ENCODE measurements at regions of chr10 and their contacts with region 1.

Region 1: DNA sequence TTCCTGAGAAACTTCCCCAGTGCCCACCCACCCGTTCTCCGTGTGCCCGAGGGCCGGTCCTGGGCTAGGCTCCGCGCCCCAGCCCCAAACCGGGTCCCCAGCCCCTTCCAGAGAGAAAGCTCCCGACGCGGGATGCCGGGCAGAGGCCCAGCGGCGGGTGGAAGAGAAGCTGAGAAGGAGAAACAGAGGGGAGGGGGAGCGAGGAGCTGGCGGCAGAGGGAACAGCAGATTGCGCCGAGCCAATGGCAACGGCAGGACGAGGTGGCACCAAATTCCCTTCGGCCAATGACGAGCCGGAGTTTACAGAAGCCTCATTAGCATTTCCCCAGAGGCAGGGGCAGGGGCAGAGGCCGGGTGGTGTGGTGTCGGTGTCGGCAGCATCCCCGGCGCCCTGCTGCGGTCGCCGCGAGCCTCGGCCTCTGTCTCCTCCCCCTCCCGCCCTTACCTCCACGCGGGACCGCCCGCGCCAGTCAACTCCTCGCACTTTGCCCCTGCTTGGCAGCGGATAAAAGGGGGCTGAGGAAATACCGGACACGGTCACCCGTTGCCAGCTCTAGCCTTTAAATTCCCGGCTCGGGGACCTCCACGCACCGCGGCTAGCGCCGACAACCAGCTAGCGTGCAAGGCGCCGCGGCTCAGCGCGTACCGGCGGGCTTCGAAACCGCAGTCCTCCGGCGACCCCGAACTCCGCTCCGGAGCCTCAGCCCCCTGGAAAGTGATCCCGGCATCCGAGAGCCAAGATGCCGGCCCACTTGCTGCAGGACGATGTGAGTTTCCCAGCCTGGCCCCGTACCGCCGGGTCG is at the start of gene SCD:
- DNase-seq: peak; percentile 81
- ATAC-seq: peak; percentile 94
- H3K4me3 ChIP-seq: peak within 1 kb of the TSS; percentile 89 to 94
- H3K27ac ChIP-seq: peak within 1 kb of the TSS; percentile 95
- H3K4me1 ChIP-seq: peaks cover 47% of the 10 kb centered on the region
- H3K27me3 ChIP-seq: no peaks in the 10 kb centered on the region
- CTCF ChIP-seq: no peak
- total RNA-seq, gene SCD: 1,345 TPM

Region 2: GRCh38 chr10:100373298-100374136 is 26.6 kb after region 1 on chr10:
- CTCF ChIA-PET with region 1: interaction called, 7 read pairs
- POLR2A ChIA-PET with region 1: interaction called, 13 read pairs
- in situ Hi-C with region 1: no loop called
- intact Hi-C with region 1: no loop called
- DNase-seq: peak; percentile 95
- ATAC-seq: peak; percentile 93
- H3K4me3 ChIP-seq: peak overlapping the region; percentile 72 to 82
- H3K27ac ChIP-seq: peak overlapping the region; percentile 100
- H3K4me1 ChIP-seq: peaks cover 41% of the 10 kb centered on the region
- H3K27me3 ChIP-seq: no peaks in the 10 kb centered on the region
- CTCF ChIP-seq: no peak

Region 3: GRCh38 chr10:100529475-100530298 is 182.7 kb after region 1 on chr10 and contains the start of gene NDUFB8:
- CTCF ChIA-PET with region 1: no interaction called
- POLR2A ChIA-PET with region 1: interaction called, 15 read pairs
- in situ Hi-C with region 1: no loop called
- intact Hi-C with region 1: no loop called
- DNase-seq: peak; percentile 64
- ATAC-seq: peak; percentile 97
- H3K4me3 ChIP-seq: peak within 1 kb of the TSS; percentile 77 to 78
- H3K27ac ChIP-seq: peak within 1 kb of the TSS; percentile 78
- H3K4me1 ChIP-seq: peaks cover 15% of the 10 kb centered on the region
- H3K27me3 ChIP-seq: no peaks in the 10 kb centered on the region
- CTCF ChIP-seq: no peak
- total RNA-seq, gene NDUFB8: 242 TPM